ENCODE measurements at regions of chr2 and their contacts with region 1.

Region 1: DNA sequence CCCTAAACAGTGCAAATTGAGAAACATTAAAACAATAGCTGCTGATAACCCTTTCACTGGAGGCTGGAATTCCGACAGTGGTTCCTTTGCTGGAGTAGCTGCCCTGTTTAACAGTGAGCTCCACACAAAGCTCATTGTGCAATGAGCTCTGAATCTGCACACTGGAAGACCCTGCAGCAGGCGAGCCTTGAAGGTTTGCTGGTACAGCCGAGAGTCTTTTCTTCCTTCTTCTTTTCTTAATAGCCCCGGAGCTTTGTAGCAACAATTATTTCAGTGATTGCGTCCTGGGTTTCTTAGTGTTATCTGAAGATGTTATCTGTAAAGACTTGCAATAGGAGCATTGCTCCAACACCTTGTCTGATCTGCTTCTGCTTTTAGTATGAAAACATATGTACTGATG is 50.8 kb upstream of the CXCR4 start:
- DNase-seq: no peak
- H3K4me3 Mint-ChIP-seq: no peak overlapping the region
- H3K27ac Mint-ChIP-seq: no peak overlapping the region
- H3K4me1 Mint-ChIP-seq: peaks cover 9% of the 10 kb centered on the region
- H3K27me3 Mint-ChIP-seq: no peaks in the 10 kb centered on the region

Region 2: DNA sequence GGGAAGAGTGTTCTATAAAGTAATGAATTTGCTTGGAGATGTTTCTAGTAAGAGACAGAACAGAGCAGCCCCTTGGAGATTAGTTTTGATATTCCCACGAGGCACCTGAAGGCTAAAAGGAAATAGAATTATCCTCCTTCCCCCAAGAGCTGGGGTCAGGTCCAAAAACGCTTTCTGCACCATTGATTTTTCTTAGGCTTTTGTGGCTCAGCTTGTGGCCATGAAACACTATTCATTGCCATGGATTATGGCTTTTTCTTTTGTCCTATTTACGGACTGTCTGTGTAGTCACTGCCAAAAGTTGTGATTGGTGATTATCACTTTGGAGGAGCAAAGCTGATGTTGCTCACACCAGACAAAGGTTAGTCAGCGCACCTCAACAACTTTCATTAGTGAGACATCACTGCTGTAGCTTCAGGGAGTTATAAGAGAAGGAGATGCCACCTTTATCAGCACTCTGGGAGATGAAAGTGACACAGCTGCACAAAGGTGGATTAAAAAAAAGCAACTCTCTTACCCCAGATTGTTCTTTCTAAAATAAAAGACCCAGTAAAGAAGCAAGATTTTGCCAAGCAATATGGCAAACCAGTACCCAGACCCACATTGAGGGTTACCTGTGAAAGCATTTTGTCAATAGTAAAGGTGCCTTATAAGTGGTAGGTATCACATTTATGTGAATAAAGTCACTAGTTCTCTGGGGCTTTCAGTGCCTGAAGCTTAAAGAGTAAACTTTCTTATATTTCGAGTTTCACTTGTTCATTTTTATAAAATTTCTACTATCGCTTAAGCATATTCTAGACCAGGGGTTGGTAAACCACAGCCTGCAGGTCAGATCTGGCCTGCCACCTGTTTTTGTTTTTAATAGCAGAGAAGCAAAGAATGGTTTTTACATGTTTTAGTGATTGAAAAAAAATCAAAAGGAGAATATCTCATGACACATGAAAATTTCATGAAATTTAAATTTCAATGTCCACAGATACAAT is 61.4 kb before region 1 on chr2:
- CTCF ChIA-PET with region 1: no interaction called
- POLR2A ChIA-PET with region 1: no interaction called
- DNase-seq: no peak
- H3K4me3 Mint-ChIP-seq: no peak overlapping the region
- H3K27ac Mint-ChIP-seq: no peak overlapping the region
- H3K4me1 Mint-ChIP-seq: peaks cover 10% of the 10 kb centered on the region
- H3K27me3 Mint-ChIP-seq: no peaks in the 10 kb centered on the region

Region 3: GRCh38 chr2:136246086-136246669 is 77.5 kb after region 1 on chr2:
- CTCF ChIA-PET with region 1: interaction called, 10 read pairs
- POLR2A ChIA-PET with region 1: no interaction called
- DNase-seq: no peak
- H3K4me3 Mint-ChIP-seq: no peak overlapping the region
- H3K27ac Mint-ChIP-seq: no peak overlapping the region
- H3K4me1 Mint-ChIP-seq: peaks cover 20% of the 10 kb centered on the region
- H3K27me3 Mint-ChIP-seq: no peaks in the 10 kb centered on the region

Measured in activated CD4-positive, alpha-beta T cell treated with anti-CD3 and anti-CD28 coated beads, Interleukin-2, amount 10 ng/mL, durations not matched to agents 7 days and 5 days (primary cell).